ENCODE measurements at regions of chr7 and their contacts with region 1.

Region 1: DNA sequence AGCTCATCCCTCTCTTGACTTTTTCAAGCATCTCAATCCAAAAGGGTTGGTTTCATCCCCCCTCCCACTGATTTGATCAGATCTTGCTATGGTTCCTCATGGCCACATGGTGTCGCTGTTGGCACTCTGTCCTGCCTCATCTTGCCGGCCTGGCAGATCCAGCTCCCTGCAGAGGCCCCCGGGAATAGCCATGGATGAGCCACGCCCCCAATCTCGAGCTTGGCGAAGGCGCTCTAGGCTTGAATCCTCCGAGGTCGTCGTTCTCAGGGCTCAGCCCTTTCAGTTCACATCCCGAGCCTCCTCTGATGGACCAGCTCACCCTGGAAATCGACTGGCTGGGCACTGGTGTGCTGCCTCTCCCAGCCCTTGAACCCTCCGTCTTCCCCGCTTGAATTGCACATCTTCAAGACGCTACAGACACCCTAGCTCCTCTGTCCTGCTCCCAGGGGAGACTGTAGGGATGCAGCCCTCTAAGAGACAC is 628.7 kb downstream of the TYW1 start:
- DNase-seq: peak; percentile 24
- ATAC-seq: peak; percentile 90
- H3K4me3 ChIP-seq: peak overlapping the region in 1 of 2 experiments; percentile 17; a peak in 1 of 4 replicates
- H3K27ac ChIP-seq: no peak overlapping the region
- H3K4me1 ChIP-seq: no peaks in the 10 kb centered on the region
- H3K27me3 ChIP-seq: peaks cover 2% of the 10 kb centered on the region; the same call in 1 of the 2 replicates
- CTCF ChIP-seq: peak; percentile 91

Region 2: DNA sequence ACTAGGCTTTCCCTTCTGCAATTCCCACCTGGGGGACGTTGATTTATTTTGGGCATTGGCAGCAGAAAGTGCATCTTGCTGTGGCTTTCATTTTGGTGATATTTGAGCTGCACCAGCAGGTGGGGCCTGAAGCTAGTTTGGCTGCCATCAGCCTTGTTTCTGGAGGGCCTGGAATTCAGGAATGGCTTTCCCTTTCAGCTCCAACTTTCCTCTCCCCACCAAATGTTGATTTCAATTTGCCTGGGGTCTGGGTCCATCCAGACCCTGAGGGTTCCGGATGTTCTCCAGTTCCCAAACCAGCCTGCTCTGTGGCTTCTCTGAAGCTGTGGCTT is 11.7 kb after region 1 on chr7:
- CTCF ChIA-PET with region 1: interaction called, 12 read pairs
- POLR2A ChIA-PET with region 1: no interaction called
- in situ Hi-C with region 1: no loop called
- intact Hi-C with region 1: no loop called
- DNase-seq: no peak
- ATAC-seq: no peak
- H3K4me3 ChIP-seq: no peak overlapping the region
- H3K27ac ChIP-seq: no peak overlapping the region
- H3K4me1 ChIP-seq: no peaks in the 10 kb centered on the region
- H3K27me3 ChIP-seq: no peaks in the 10 kb centered on the region; the same call in 1 of the 2 replicates
- CTCF ChIP-seq: no peak

Region 3: DNA sequence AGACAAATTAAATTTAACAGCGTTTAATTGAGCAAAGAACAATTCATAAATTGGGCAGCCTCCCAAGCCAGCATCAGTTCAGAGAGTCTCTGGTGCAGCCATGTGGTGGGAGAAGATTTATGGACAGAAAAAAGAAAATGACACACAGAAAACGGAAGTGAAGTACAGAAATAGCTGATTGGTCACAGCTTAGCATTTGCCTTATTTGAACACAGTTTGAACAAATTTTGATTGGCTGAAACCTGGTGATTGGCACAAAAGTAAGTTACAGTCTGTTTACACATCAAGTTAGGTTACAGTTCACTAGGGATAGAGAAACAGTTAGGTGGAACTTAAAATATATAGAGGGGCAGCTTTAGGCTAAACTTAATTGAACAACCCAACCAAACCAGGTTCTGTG is 91.4 kb after region 1 on chr7:
- CTCF ChIA-PET with region 1: no interaction called
- POLR2A ChIA-PET with region 1: no interaction called
- in situ Hi-C with region 1: no loop called
- intact Hi-C with region 1: no loop called
- DNase-seq: no peak
- ATAC-seq: no peak
- H3K4me3 ChIP-seq: no peak overlapping the region
- H3K27ac ChIP-seq: no peak overlapping the region
- H3K4me1 ChIP-seq: no peaks in the 10 kb centered on the region
- H3K27me3 ChIP-seq: no peaks in the 10 kb centered on the region
- CTCF ChIP-seq: no peak